ENCODE measurements at regions of chr17 and their contacts with region 1.

Region 1: DNA sequence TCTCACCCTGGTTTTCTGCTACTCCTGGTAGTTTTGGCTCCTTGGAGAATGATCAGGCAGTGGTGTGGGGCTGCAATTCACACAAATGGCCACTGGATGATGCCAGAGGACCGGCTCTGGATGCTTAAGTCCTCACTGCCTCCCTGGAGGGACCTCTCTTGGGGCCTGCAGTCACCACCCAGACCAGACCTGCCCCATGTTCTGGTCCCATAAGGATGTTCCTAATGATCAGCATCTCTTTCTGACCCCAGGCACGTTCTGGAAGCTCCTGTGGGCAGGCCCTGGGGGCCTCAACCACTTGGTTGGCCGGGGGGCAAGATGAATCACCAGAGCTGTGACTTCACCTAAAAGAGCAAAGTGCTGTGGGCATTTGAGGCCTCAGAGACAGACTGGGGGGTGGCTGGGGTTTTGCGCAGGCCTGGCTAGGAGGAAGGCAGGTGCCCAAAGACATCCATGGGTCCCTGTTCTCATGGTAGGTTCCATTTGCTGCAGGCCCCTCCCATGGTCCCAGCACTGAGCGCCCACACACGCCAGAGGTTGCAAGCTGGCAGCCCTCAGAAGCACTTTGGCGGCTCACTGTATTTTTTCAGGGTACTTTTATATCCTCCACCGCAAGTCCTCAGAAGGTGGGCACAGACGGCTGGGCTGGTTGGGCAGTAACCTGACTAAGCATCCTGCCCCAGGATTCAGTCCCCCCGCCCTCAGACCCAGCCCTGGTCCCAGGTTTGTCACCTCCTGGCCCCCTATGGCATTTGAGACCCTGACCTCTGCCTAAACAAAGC is 53.2 kb downstream of the NT5M start:
- DNase-seq: peak; percentile 82
- H3K4me3 ChIP-seq: no peak overlapping the region
- H3K27ac ChIP-seq: no peak overlapping the region
- H3K4me1 ChIP-seq: peaks cover 14% of the 10 kb centered on the region
- H3K27me3 ChIP-seq: no peaks in the 10 kb centered on the region
- CTCF ChIP-seq: peak; percentile 99 to 100
- POLR2A ChIP-seq: no peak

Region 2: DNA sequence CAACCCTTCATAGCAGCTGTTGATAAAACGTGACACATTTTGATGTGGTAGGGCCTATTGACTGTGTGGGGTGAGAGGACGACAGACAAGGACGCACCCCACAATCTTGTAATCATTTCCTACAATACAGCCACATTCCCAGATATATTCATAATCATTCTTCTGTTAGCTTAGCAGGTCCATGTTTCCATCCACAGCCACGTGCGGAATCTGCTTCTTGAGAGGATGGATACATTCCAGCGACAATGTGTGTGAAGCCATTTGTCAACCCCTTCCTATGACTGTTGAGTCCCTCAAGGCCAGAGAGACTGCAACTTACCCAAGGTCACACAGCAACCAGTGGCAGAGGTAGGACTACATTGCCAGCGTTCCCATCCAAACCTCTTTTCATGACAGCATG is 66.6 kb before region 1 on chr17:
- CTCF ChIA-PET with region 1: no interaction called
- POLR2A ChIA-PET with region 1: no interaction called
- dilution Hi-C with region 1: no loop called
- intact Hi-C with region 1: no loop called
- DNase-seq: no peak
- H3K4me3 ChIP-seq: no peak overlapping the region
- H3K27ac ChIP-seq: no peak overlapping the region
- H3K4me1 ChIP-seq: no peaks in the 10 kb centered on the region
- H3K27me3 ChIP-seq: peaks cover 0 to 2% of the 10 kb centered on the region in 2 experiments
- CTCF ChIP-seq: no peak
- POLR2A ChIP-seq: no peak

Region 3: GRCh38 chr17:17401271-17401781 is 45.0 kb after region 1 on chr17:
- CTCF ChIA-PET with region 1: no interaction called
- POLR2A ChIA-PET with region 1: no interaction called
- dilution Hi-C with region 1: no loop called
- intact Hi-C with region 1: loop called (anchors 2 kb)
- DNase-seq: no peak
- H3K4me3 ChIP-seq: no peak overlapping the region
- H3K27ac ChIP-seq: no peak overlapping the region
- H3K4me1 ChIP-seq: peaks cover 24% of the 10 kb centered on the region
- H3K27me3 ChIP-seq: no peaks in the 10 kb centered on the region
- CTCF ChIP-seq: peak in 1 of 2 donors; percentile 3
- POLR2A ChIP-seq: no peak

Region 4: DNA sequence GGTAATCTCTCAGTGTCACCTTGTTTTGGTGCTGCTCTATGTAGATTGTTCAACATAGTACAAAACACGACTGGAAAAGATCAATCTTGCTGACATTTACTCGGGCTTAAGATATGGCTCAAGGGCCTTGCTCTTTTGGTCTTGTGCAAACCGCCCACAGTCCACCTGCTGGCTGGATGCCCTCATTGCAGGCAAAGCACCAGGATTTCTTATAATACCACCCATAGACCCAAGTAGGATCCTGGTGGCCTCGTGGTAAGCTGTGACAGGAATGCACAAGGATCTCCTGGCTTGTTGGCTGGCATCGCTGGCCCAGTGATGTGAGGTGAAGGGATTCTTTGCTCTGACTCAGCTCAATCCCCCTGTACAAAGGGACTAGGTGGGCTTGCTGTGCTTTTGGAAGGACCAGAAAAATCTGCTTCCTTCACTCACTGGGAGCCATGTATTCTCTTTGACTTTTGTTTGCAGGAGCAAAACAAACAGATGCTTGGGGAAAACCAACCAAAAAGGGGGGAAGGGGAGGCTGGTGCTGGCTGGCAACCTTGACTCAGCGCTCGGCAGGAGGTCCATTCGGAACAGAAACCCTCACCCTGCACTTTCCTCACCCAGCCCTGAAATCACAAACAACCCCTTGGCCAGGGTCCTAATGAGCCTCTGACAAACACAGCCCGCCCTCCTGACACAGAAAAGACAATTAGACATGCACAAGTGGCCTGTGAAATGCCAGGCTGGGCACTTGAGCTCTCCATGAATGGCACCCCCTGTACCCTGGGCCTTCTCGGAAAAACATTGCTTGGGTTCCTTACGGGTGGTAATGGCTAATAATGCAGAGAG is 83.9 kb after region 1 on chr17:
- CTCF ChIA-PET with region 1: no interaction called
- POLR2A ChIA-PET with region 1: no interaction called
- dilution Hi-C with region 1: no loop called
- intact Hi-C with region 1: loop called (anchors 1 kb)
- DNase-seq: peak; percentile 57
- H3K4me3 ChIP-seq: no peak overlapping the region
- H3K27ac ChIP-seq: no peak overlapping the region
- H3K4me1 ChIP-seq: peaks cover 12% of the 10 kb centered on the region
- H3K27me3 ChIP-seq: no peaks in the 10 kb centered on the region
- CTCF ChIP-seq: peak; percentile 55 to 70
- POLR2A ChIP-seq: no peak

Region 5: DNA sequence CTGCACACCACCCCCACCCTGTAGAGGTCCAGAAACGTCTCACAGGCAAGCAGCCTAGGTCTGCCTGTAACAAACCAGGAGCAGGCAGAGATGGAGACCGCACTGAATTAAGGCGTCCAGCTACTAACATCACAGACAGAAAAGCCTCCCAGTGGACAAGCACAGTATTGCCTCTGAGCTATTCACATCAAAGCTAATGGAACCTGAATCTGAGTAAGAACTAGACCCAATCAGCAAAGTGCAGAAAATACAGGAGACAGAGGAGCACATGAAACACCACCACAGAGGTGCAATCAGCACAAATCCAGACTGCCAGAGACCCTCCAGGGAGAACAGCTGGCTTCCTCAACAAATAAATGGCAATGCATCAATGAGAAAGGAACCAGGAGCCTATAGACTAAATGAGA is 257.4 kb after region 1 on chr17:
- CTCF ChIA-PET with region 1: interaction called, 35 read pairs
- POLR2A ChIA-PET with region 1: no interaction called
- dilution Hi-C with region 1: no loop called
- intact Hi-C with region 1: loop called (anchors 1 kb)
- DNase-seq: peak; percentile 73
- H3K4me3 ChIP-seq: no peak overlapping the region
- H3K27ac ChIP-seq: no peak overlapping the region
- H3K4me1 ChIP-seq: no peaks in the 10 kb centered on the region
- H3K27me3 ChIP-seq: peaks cover 0 to 1% of the 10 kb centered on the region in 2 experiments
- CTCF ChIP-seq: peak; percentile 66 to 78
- POLR2A ChIP-seq: no peak

Region 6: DNA sequence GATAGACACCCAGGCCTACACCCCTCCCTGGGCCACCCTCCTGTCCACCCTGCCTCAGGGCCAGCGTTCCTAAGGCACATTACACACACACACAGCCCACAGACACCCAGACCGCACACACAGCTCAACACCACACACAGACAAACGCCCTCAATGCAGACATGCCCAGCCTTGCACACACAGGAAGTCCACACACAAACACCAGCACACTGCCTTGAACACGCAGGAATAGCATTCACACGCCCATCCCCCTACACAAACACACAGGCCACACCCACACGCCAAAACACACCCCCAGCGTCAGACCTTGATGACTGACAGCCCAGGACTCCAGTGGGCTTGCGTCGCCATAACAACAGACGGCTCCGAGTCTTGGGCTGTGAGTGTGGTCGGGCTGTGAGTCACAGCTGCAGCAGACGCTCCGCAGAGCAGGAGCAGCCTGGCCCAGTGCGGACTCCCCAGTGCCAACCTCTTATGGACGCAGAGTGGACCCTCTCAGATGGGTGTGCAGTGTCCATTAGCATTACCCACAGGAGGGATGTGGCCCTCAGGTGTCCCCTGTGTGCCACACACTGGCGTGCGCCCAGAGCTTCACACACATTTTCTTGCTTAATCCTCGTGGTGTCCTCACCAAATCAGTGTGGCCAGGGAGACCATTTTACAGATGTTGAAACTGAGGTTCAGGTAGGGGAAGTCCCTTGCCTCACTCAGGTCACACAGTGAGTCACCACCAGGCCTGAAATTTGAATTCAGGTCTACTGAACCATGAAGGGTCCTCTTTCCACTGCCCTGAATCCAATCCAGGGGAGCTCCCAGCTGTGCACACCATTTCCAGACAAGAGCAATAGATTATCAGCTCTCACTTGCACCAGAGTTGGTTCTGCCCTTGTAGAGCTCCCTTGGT is 307.1 kb after region 1 on chr17:
- CTCF ChIA-PET with region 1: interaction called, 4 read pairs
- POLR2A ChIA-PET with region 1: no interaction called
- dilution Hi-C with region 1: no loop called
- intact Hi-C with region 1: loop called (anchors 5 kb)
- DNase-seq: peak; percentile 87
- H3K4me3 ChIP-seq: no peak overlapping the region
- H3K27ac ChIP-seq: no peak overlapping the region
- H3K4me1 ChIP-seq: no peaks in the 10 kb centered on the region
- H3K27me3 ChIP-seq: no peaks in the 10 kb centered on the region
- CTCF ChIP-seq: no peak
- POLR2A ChIP-seq: no peak

Region 7: GRCh38 chr17:17812211-17813057 is 456.1 kb after region 1 on chr17:
- CTCF ChIA-PET with region 1: no interaction called
- POLR2A ChIA-PET with region 1: no interaction called
- dilution Hi-C with region 1: no loop called
- intact Hi-C with region 1: no loop called
- DNase-seq: peak; percentile 68
- H3K4me3 ChIP-seq: no peak overlapping the region
- H3K27ac ChIP-seq: no peak overlapping the region
- H3K4me1 ChIP-seq: peaks cover 3% of the 10 kb centered on the region
- H3K27me3 ChIP-seq: no peaks in the 10 kb centered on the region
- CTCF ChIP-seq: peak; percentile 95 to 96
- POLR2A ChIP-seq: no peak

Measured in endothelial cell of umbilical vein (primary cell).